ENCODE measurements at regions of chr4 and their contacts with region 1.

Region 1: GRCh38 chr4:148842843-148843242 is 400.6 kb upstream of the NR3C2 start:
- DNase-seq: no peak

Region 2: DNA sequence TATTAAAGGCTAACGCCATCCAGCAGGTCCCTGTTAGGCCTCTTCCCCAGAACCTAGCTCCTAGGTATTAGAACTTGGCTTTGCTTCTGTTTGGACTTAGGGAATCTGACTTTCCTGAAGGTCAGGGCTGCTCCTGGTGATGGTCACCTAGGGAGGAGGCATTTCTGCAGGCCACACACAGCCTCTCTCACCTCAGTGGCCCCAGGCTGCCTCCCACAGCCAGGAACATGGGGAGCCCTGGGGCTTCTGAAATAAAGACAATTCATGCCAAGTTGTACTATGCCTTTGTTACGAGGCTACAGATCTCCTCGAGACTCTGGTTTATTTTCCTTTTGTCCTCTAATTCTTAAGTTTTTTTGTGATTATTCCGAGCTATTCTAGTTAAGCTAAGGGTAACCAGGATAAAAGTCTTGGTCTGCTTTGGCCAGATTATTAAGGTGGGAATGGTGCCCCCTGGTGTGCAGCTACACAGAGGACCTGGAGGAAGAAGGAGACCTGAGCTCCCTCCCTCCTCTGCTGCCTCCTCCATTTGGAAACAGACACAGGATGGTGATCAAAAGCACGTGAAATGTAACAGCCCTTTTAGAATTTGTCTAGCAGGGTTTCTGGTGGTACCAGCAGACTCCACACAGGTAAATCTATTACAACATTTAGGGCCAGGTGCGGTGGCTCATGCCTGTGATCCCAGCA is 1366.4 kb after region 1 on chr4:
- intact Hi-C with region 1: loop called in 1 of 2 experiments (anchors 5 kb)
- DNase-seq: peak; percentile 86

Measured in posterior vena cava (tissue), 2 donors.